H1 (cell line): ENCODE measurements at regions of chr15 and their contacts with region 1.

Region 1: GRCh38 chr15:43285609-43286037 is 18.9 kb upstream of the TGM5 start:
- DNase-seq: peak in 1 of 2 experiments; percentile 70
- H3K4me3 ChIP-seq: no peak overlapping the region
- H3K27ac ChIP-seq: no peak overlapping the region
- H3K4me1 ChIP-seq: no peaks in the 10 kb centered on the region
- H3K27me3 ChIP-seq: no peaks in the 10 kb centered on the region
- CTCF ChIP-seq: peak in 2 of 3 experiments; percentile 80 to 83; a peak in 3 of 4 replicates
- EP300 ChIP-seq: no peak
- POLR2A ChIP-seq: no peak
- RAD21 ChIP-seq: peak; percentile 93 to 95

Region 2: DNA sequence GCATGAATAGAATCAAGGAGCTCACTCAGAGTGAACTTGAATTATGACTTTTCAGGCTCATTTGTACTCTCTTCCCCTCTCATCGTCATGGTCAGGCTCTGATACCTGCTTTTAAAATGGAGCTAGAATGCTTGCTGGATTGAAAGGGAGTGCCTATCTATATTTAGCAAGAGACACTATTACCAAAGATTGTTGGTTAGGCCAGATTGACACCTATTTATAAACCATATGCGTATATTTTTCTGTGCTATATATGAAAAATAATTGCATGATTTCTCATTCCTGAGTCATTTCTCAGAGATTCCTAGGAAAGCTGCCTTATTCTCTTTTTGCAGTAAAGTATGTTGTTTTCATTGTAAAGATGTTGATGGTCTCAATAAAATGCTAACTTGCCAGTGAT is 90.8 kb before region 1 on chr15:
- CTCF ChIA-PET with region 1: interaction called, 18 read pairs
- POLR2A ChIA-PET with region 1: no interaction called
- DNase-seq: no peak
- H3K4me3 ChIP-seq: no peak overlapping the region
- H3K27ac ChIP-seq: no peak overlapping the region
- H3K4me1 ChIP-seq: no peaks in the 10 kb centered on the region
- H3K27me3 ChIP-seq: no peaks in the 10 kb centered on the region
- CTCF ChIP-seq: no peak
- EP300 ChIP-seq: no peak
- POLR2A ChIP-seq: no peak
- RAD21 ChIP-seq: no peak

Region 3: DNA sequence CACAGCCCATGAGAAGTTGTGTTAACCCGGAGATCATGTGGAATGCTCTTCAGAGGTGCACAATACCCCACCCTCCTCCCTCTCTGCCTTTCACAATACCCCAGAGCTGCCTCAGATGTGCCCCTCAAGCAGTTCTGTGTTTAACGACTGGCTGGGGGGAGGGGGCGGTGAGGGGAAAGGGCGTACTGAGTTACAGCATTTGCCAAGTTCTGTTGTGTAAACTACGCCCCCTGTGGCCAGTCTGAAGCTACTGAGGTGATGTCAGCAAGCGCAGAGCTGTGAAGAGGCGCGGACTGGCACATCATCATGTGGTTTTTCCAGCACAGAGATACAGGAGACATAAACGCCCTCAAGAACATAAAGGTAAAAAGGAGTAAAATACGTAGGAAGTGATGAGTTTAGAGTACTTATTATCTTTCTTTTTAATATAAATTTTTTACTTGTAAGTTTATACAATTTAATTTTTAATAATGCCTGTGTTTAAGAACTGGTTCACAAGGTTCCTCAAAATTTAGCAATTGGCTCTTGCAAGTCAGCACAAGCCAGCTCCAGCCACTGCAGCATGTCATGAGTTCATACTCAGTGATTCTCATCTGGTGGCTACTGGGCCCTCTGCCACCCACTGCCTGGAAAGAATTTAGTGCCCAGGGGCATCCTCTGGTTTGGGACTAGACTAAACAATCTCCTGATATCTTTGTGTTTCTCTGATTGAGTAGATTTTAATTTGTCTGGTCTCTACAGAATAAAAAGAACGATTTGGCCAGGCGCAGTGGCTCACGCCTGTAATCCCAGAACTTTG is 66.5 kb before region 1 on chr15:
- CTCF ChIA-PET with region 1: interaction called, 178 read pairs
- POLR2A ChIA-PET with region 1: no interaction called
- DNase-seq: peak in 1 of 2 experiments; percentile 77
- H3K4me3 ChIP-seq: no peak overlapping the region
- H3K27ac ChIP-seq: no peak overlapping the region
- H3K4me1 ChIP-seq: peaks cover 0 to 3% (median 1%) of the 10 kb centered on the region in 4 experiments; a peak in 3 of 7 replicates
- H3K27me3 ChIP-seq: peaks cover 0 to 2% (median 0%) of the 10 kb centered on the region in 4 experiments; a peak in 2 of 7 replicates
- CTCF ChIP-seq: peak; percentile 75 to 80 (median 79)
- EP300 ChIP-seq: no peak
- POLR2A ChIP-seq: no peak
- RAD21 ChIP-seq: peak; percentile 38 to 54; a peak in 3 of 4 replicates

Region 4: DNA sequence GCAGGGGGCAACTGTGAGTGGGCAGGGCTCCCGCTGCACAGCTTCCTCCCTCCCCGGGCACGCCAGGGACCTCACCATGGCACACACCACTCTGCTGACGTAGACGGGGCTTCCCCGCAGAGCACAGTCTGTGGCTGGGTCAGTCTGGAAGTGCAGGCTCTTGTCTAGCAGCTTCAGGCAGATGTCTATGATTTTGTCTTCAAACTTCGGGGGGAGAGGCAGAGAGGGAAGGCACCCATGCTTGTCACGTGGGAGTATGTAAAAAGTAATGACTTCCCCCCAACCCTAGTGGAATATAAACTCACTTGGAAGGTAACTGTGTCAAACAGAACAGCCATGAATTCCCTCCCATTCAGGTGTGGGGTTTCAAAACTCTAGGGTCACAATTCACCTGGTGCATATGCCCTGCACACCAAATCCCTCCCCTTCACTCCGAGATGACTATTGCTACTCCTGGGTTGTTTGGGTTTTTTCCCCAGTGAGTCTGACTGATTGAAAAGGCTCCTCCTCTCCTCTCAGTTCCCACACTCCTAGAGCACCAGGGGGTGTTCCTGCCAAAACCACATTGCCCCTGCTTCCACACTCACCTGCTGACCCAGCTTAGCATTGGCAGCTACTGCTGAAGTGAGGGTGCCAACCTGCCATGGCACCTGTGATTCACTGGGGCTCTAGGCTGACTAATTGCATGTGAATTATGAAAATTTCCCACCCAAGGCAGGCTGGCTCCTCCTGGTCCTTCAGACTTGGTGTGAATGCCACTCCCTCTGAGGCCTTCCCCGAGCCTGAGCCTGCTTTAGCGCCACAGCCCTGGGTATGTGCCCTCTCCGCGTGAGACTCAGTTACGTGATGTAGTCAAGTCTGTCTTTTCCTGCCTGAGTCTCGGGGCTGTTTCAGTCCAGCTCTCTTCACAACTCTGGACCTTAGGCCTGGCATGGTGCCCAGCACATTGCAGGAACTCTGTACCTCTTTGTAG is 31.9 kb before region 1 on chr15:
- CTCF ChIA-PET with region 1: interaction called, 11 read pairs
- POLR2A ChIA-PET with region 1: interaction called, 3 read pairs
- DNase-seq: no peak
- H3K4me3 ChIP-seq: no peak overlapping the region
- H3K27ac ChIP-seq: no peak overlapping the region
- H3K4me1 ChIP-seq: no peaks in the 10 kb centered on the region
- H3K27me3 ChIP-seq: no peaks in the 10 kb centered on the region; a peak in 1 of 7 replicates
- CTCF ChIP-seq: no peak
- EP300 ChIP-seq: no peak
- POLR2A ChIP-seq: no peak
- RAD21 ChIP-seq: no peak

Region 5: DNA sequence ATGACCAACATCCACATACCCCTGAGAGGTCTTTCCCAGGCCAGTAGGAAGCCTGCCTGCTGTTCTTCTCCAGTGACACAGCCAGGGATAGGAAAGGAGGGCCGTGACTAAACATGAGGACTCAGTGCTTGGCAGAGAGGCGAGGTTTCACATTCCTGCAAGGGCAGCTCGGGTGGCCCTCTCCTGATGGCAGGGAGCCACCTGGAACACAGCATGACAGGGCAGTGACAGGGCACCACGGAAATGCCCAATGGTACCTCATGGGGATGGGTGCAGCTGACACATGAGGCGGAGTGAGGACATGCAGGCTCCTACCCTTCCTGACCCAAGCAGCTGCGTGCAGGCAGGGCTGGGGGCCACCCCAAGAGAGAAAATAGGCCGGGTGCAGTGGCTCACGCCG is 11.5 kb before region 1 on chr15:
- CTCF ChIA-PET with region 1: interaction called, 35 read pairs
- POLR2A ChIA-PET with region 1: no interaction called
- DNase-seq: no peak
- H3K4me3 ChIP-seq: no peak overlapping the region
- H3K27ac ChIP-seq: no peak overlapping the region
- H3K4me1 ChIP-seq: no peaks in the 10 kb centered on the region
- H3K27me3 ChIP-seq: no peaks in the 10 kb centered on the region
- CTCF ChIP-seq: no peak
- EP300 ChIP-seq: no peak
- POLR2A ChIP-seq: no peak
- RAD21 ChIP-seq: no peak

Region 6: DNA sequence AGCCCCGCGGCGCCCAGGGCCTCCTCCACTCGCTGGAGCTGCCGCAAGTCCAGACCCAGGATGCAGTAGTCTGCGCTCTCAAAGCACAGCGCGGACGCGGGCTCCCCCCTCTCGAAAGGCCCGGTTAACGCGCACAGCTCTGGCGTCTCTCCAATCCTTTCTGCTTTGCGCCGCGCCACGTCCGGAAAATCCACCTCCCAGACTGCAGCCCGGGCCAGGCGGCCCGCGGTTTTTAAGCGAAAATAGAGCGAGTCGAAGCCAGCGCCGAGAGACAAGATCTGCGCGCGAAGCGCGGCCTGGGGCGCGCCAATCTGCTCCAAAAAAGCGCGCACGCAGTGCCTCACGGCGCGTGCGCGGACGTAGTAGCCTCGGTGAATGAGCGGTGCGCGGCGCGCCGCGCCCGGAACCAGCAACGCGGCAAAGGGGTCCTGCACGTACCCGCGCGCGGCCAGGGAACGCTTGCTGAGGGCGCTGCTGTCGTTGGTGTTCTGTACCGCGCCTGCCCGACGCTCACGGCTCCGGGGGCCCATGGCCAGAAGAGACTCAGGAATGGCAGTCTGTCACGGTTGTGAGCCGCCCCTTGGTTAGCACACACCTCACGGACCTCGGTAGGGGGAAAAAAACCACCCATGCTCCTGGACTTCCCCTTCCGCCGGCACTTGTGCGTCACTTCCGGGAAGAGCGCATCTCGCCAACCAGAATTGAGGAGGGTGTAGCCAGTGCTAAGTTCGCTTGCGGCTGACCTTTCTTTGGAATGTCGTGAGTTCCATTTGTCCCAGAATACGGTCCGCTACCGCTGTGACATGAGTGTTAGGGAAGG is 44.5 kb after region 1 on chr15 and contains the start of gene LCMT2:
- CTCF ChIA-PET with region 1: interaction called, 13 read pairs
- POLR2A ChIA-PET with region 1: no interaction called
- DNase-seq: peak; percentile 79 to 90
- H3K4me3 ChIP-seq: peak within 1 kb of the TSS; percentile 73 to 90 (median 83)
- H3K27ac ChIP-seq: peak within 1 kb of the TSS; percentile 89
- H3K4me1 ChIP-seq: peaks cover 4 to 10% (median 5%) of the 10 kb centered on the region in 4 experiments; a peak in 6 of 7 replicates
- H3K27me3 ChIP-seq: no peaks in the 10 kb centered on the region
- CTCF ChIP-seq: no peak; a peak in 1 of 4 replicates
- EP300 ChIP-seq: no peak; a peak in 1 of 3 replicates
- POLR2A ChIP-seq: peak in 1 of 2 experiments; percentile 89; a peak in 2 of 3 replicates
- RAD21 ChIP-seq: no peak
- total RNA-seq, gene LCMT2: 9.3 and 11.2 TPM in 2 replicates

Region 7: GRCh38 chr15:43423793-43424192 is 138.2 kb after region 1 on chr15:
- CTCF ChIA-PET with region 1: no interaction called
- POLR2A ChIA-PET with region 1: no interaction called
- DNase-seq: no peak
- H3K4me3 ChIP-seq: no peak overlapping the region
- H3K27ac ChIP-seq: no peak overlapping the region
- H3K4me1 ChIP-seq: no peaks in the 10 kb centered on the region
- H3K27me3 ChIP-seq: no peaks in the 10 kb centered on the region
- CTCF ChIP-seq: no peak
- EP300 ChIP-seq: no peak
- POLR2A ChIP-seq: no peak
- RAD21 ChIP-seq: no peak